Colonic mucosa (tissue), 4 donors: ENCODE measurements at regions of chr2 and their contacts with region 1.

Region 1: GRCh38 chr2:176653479-176654443 is 384.5 kb downstream of the MTX2 start:
- DNase-seq: peak; percentile 60
- H3K4me3 ChIP-seq: no peak overlapping the region
- H3K27ac ChIP-seq: no peak overlapping the region
- H3K4me1 ChIP-seq: no peaks in the 10 kb centered on the region
- H3K27me3 ChIP-seq: no peaks in the 10 kb centered on the region
- CTCF ChIP-seq: peak; percentile 73

Region 2: DNA sequence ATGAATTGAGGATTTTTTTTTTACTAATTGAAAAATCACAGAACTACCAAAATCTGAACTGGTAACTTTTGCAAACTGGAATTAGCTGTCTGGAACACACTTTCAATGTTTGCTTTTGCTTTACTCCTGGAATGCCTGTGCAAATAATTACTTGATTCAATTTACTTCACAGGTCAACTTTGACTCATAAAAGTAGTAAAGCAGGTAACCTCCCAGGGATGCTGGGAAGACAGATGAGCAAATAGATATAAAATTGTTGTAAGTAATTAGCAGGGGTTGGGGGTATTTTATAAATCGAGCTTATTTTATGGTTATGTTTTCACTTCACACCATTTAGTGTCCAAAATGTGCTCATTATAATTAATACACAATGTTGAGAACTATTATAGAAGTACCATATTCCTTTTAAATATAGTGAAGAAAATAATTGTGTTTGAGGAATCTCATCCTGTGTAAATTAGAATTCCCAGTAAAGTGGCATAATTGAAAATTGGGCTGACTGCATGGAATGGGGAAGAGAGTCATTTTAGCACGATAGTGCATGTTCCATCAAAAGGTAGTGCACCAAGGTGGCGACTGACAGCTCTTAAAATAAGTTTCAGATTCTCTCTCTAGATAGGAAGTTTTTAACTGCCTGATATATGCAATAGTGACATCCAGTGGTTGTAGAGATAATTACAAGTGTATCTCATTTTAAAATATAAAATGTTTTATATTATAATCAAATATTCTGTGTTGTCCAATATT is 160.7 kb after region 1 on chr2:
- intact Hi-C with region 1: loop called (anchors 5 kb)
- DNase-seq: no peak
- H3K4me3 ChIP-seq: no peak overlapping the region
- H3K27ac ChIP-seq: no peak overlapping the region
- H3K4me1 ChIP-seq: no peaks in the 10 kb centered on the region
- H3K27me3 ChIP-seq: peaks cover 3% of the 10 kb centered on the region
- CTCF ChIP-seq: peak; percentile 43

Region 3: DNA sequence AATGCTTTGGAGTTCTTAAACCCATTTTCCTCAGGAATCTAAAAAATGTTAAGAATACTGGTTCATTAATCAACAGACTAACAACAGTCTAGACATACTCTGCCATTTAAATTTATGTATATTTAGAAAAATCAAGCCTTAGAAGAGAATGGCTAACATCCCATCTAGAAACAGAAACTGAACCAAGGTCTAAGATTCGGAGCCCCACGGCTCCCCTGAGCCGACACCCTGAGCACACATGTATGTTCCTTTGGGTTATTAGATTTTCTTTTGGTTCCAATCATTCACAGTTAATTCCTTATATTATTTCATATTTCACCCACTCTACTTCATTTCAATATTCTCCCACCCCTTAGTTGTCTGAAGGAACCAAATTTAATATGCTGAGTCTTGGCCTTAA is 464.0 kb after region 1 on chr2:
- intact Hi-C with region 1: no loop called
- DNase-seq: no peak
- H3K4me3 ChIP-seq: no peak overlapping the region
- H3K27ac ChIP-seq: no peak overlapping the region
- H3K4me1 ChIP-seq: no peaks in the 10 kb centered on the region
- H3K27me3 ChIP-seq: no peaks in the 10 kb centered on the region
- CTCF ChIP-seq: no peak

Region 4: GRCh38 chr2:177148477-177149154 is 494.9 kb after region 1 on chr2:
- intact Hi-C with region 1: loop called (anchors 10 kb)
- DNase-seq: peak; percentile 87
- H3K4me3 ChIP-seq: peak overlapping the region; percentile 36
- H3K27ac ChIP-seq: no peak overlapping the region
- H3K4me1 ChIP-seq: no peaks in the 10 kb centered on the region
- H3K27me3 ChIP-seq: peaks cover 5% of the 10 kb centered on the region
- CTCF ChIP-seq: peak; percentile 64